Activated naive CD4-positive, alpha-beta T cell treated with anti-CD3 and anti-CD28 coated beads for 36 hours (primary cell): ENCODE measurements at regions of chr3 and their contacts with region 1.

Region 1: DNA sequence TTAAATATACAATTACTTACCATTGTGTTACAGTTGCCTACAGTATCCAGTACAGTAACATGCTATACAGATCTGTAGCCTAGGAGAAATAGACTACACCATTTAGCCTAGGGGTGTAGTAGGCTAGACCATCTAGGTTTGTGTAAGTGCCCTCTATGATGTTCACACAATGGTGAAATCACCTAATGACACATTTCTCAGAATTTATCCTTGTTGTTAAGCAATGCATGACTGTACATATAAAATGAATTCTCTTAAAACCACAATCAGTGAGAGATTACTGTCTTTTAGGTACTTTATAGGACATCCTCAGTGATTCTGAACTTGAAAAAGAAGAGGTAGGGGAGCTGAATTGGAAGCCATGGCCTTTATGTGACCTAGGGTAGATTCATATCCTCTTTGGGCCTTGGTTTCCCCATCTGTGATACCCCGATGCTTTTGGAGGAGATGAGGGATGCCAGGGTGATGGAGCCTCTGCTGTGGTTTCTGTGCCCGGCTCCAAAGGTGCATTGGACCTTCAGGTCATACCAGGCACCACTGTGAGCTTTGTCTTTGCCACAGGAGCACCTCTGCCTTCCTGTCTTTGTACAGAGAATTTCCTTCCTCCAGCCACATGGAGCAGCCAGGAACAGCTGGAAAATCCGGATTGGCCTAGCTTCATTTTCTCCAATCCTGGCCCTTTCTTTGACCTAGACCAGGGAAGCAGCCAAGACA is 51.9 kb upstream of the FLNB start:
- DNase-seq: no peak
- H3K4me3 Mint-ChIP-seq: no peak overlapping the region
- H3K27ac Mint-ChIP-seq: peak overlapping the region; percentile 6
- H3K4me1 Mint-ChIP-seq: peaks cover 13% of the 10 kb centered on the region
- H3K27me3 Mint-ChIP-seq: no peaks in the 10 kb centered on the region

Region 2: DNA sequence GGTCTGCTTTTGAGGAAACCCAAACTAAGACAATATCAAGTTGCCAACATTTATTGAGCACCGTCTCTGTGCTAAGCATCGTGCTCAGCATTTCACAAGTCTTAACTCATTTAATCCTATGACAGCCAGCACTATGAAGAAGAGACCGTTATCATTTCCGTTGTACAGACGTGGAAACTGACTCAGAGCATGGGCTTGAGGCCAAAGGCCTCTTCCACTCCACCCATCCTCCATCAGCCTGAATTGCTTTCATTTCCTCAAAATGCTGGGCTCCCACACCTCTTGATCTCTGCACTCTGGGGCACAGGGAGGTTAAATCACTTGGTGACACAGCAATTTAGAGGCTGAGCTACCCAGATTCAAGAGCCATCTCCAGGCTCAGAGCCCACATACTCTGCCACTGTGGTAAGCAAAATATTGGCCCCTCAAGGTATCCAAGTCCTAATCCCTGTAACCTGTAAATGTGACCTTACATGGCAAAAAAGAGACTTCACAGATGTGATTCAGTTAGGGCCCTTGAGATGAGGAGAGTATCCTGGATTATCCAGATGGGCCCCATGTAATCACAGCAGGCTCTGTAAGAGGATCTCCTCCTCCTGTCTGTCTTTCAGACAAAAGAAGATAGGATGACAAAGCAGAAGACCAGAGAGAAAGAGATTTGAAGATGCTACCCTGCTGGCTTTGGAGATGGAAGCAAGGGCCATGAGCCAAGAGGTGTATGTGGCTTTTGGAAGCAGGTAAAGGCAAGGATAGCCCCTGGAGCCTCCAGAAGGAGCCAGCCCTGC is 27.6 kb after region 1 on chr3:
- CTCF ChIA-PET with region 1: no interaction called
- intact Hi-C with region 1: loop called (anchors 1 kb)
- DNase-seq: peak; percentile 83
- H3K4me3 Mint-ChIP-seq: no peak overlapping the region
- H3K27ac Mint-ChIP-seq: peak overlapping the region; percentile 77
- H3K4me1 Mint-ChIP-seq: peaks cover 22% of the 10 kb centered on the region
- H3K27me3 Mint-ChIP-seq: no peaks in the 10 kb centered on the region